Ascending aorta (tissue), 2 donors: ENCODE measurements at regions of chr16 and their contacts with region 1.

Region 1: GRCh38 chr16:3023669-3024478 is at the starts of genes HCFC1R1 and THOC6:
- DNase-seq: peak; percentile 91 to 99
- H3K4me3 ChIP-seq: peak within 1 kb of the TSS; percentile 93 to 95
- H3K27ac ChIP-seq: peak within 1 kb of the TSS; percentile 98 to 100
- H3K4me1 ChIP-seq: peaks cover 9 to 30% of the 10 kb centered on the region in 2 donors
- H3K27me3 ChIP-seq: no peaks in the 10 kb centered on the region
- CTCF ChIP-seq: no peak
- total RNA-seq, gene HCFC1R1: 50.8 TPM
- total RNA-seq, gene THOC6: 32.6 TPM

Region 2: GRCh38 chr16:2267913-2268666 is 755.8 kb before region 1 on chr16 and contains the start of gene RNPS1:
- intact Hi-C with region 1: loop called (anchors 5 kb)
- DNase-seq: peak; percentile 77 to 98
- H3K4me3 ChIP-seq: peak within 1 kb of the TSS; percentile 63 to 92
- H3K27ac ChIP-seq: peak within 1 kb of the TSS; percentile 95 to 98
- H3K4me1 ChIP-seq: peaks cover 10 to 21% of the 10 kb centered on the region in 2 donors
- H3K27me3 ChIP-seq: no peaks in the 10 kb centered on the region
- CTCF ChIP-seq: no peak
- total RNA-seq, gene RNPS1: 134 TPM

Region 3: DNA sequence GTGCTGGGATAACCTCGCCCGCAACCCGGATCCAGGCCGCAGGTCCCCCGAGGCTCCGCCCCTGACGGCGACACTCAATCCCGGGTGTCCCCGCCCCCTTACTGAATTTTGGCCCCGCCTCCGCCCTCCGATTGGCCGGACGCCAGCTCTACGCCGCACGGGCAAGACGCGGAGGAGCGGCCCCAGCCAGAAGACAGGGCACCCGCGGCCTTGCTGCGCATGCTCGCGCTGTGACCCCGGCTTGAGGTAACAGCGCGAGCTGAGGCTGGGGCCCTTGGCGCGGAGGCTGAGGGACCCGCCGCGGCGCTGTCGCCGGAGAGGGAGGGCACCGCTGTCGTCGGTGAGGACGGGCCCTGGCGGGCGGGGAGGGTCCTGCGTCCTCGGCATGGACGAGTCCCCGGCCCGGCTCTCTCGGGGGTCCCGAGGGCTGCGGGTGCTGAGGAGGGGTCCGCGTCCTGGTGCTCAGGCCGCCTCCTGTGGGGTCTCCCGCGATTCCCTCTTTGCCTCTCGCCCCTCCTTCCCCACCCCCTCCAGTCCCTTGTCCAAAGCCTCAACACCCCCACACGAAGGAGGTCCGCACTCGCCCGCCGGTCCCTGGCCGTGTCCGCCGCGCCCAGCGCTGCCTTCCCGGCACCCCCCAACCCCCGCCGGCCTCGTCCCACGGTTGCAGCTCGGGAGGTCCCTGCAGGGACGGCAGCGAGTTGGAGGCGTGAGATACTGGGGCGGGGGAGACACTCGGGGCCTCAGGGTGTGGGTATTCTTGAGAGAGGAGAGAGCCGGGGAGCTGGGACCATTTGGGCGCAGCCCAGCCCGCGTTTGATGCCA is 140.6 kb before region 1 on chr16 and contains the start of gene FLYWCH2:
- intact Hi-C with region 1: loop called (anchors 2 kb)
- DNase-seq: peak; percentile 96 to 99
- H3K4me3 ChIP-seq: peak within 1 kb of the TSS; percentile 64 to 86
- H3K27ac ChIP-seq: peak within 1 kb of the TSS; percentile 91 to 94
- H3K4me1 ChIP-seq: peaks cover 0 to 5% of the 10 kb centered on the region in 2 donors
- H3K27me3 ChIP-seq: no peaks in the 10 kb centered on the region
- CTCF ChIP-seq: peak in 1 of 3 experiments; percentile 35
- total RNA-seq, gene FLYWCH2: 109 TPM

Region 4: DNA sequence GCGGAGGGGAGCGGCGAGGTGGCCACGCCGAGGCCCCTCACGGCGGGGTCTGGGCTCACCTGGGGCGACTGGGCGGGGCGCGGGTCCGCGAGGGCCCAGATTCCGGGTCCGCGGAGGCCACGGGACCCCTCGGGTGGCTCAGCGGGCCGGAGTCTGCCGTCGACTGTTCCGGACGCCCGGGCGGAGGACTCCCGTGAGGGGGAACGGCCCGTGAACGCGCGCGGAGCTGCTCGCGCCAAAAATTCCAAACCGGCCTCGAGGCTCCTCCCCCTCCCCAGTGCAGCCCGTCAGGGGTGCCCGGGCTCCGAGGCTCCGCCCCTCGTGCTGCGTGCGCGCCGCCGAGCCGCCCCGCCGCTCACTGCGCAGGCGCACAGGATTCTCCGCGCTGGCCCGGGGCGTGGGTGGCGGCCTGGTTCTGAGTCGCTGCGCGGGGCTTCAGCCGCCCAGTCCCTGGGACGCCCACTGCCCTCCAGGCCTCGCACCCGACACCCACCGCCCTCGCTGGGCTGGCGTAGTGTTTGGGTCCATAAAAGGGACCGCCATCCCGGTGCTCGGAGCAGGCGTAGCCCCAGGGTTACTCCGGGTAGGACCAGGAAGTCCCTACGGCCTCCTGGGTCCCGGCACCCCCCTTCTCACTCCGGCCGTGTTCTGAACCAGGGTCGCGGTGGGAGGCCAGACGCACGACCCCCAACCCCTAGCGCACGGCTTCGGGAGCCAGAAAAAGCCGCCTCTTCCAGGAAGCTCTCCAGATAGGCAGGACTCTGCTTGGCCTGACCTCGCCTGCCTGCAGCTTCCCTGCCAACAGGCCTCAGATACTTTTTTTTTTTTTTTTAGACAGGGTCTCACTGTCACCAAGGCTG is 43.4 kb before region 1 on chr16 and contains the start of gene PKMYT1:
- intact Hi-C with region 1: loop called (anchors 1 kb)
- DNase-seq: peak; percentile 37 to 94
- H3K4me3 ChIP-seq: peak within 1 kb of the TSS; percentile 69 to 91
- H3K27ac ChIP-seq: peak within 1 kb of the TSS; percentile 69 to 82
- H3K4me1 ChIP-seq: peaks cover 9 to 12% of the 10 kb centered on the region in 2 donors
- H3K27me3 ChIP-seq: no peaks in the 10 kb centered on the region
- CTCF ChIP-seq: no peak
- total RNA-seq, gene PKMYT1: not detected

Region 5: DNA sequence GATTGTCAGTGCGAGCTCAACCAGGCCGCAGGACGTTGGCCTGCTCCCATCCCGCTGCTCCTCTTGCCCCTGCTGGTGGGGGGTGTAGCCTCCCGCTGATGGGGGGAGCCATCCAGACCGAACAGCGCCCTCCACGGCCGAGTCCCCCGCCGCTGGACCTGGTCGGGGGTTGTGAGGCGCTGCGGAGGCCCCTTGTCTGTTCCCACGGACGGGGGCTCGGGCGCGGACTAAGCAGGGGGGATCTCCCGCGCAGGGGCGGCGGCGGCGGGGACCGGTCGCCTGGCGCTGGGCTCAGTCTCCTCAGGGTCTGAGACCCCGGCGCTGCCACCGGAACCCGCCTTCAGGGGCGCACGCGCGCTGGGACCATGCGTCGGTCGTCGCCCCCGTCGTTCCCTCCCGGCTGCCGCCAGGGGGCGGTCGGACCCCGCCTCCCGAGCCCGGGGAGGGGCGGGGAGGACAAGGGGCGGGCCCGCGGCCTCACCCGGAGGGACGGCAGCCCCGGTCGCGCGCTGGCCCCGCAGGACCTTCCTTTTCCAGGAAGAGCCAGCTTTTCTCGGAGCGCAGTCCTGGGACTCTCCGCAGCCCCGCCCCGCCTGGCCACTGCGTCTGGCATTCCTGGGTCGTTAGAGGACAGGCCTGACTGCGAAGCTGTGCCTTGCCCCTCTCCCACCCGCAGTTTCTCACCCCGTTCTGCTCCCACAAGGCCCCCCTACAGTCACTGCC is 35.3 kb after region 1 on chr16:
- intact Hi-C with region 1: loop called (anchors 2 kb)
- DNase-seq: peak; percentile 39 to 92
- H3K4me3 ChIP-seq: peak overlapping the region; percentile 72 to 76
- H3K27ac ChIP-seq: peak overlapping the region; percentile 12 to 42
- H3K4me1 ChIP-seq: peaks cover 5 to 12% of the 10 kb centered on the region in 2 donors
- H3K27me3 ChIP-seq: no peaks in the 10 kb centered on the region
- CTCF ChIP-seq: peak; percentile 77 to 98 (median 86)

Region 6: GRCh38 chr16:3945751-3946603 is 922.1 kb after region 1 on chr16:
- intact Hi-C with region 1: loop called (anchors 5 kb)
- DNase-seq: peak in 1 of 2 donors; percentile 88
- H3K4me3 ChIP-seq: peak overlapping the region in 1 of 2 donors; percentile 21
- H3K27ac ChIP-seq: peak overlapping the region; percentile 81 to 82
- H3K4me1 ChIP-seq: peaks cover 0 to 10% of the 10 kb centered on the region in 2 donors
- H3K27me3 ChIP-seq: no peaks in the 10 kb centered on the region
- CTCF ChIP-seq: no peak